Heart right ventricle (tissue), 16 donors: ENCODE measurements at regions of chr10 and their contacts with region 1.

Region 1: DNA sequence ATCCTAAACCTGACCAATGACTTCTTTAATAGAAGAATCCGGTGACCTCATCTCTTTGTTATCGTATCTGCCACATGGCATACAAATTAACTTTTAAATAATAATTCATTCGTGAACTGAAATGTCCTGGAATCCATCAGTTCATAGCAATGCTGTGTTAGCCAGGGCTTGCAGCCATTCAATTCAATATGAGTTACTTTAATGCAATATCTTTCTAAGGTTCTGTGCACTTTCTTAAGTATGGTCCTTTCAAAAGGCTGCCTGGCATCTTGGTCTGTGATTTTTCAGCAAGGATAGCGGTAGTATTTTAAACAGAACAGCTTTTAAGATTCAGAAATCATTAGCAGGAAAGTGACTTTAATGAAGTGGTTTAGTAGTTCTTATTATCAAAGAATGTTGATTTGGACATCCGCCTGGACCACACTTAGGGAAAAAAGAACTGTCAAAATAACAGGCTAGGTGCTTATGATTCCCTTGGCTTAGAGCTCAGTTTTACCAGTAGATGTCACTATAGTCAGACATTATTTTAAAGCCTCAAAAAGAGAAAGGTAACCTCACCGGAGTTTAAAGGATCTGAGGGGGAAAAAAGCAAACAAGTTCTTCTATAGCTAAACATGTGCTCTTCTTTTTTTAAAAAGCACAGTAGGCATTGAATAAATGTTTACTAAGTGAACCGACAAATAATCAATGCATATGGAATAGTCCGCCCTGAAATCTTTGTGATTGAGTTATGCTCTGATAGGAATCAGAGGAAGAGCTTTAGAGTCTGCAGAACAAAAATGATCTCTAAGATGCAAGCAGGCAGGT is 22.7 kb downstream of the SLC35G1 start:
- DNase-seq: no peak
- ATAC-seq: peak in 6 of 8 donors; percentile 33 to 79 (median 70)
- H3K4me3 ChIP-seq: peak overlapping the region in 4 of 10 donors; percentile 9 to 34 (median 16)
- H3K27ac ChIP-seq: no peak overlapping the region
- H3K4me1 ChIP-seq: peaks cover 0 to 20% (median 9%) of the 10 kb centered on the region in 9 donors
- H3K27me3 ChIP-seq: no peaks in the 10 kb centered on the region
- CTCF ChIP-seq: peak; percentile 14 to 72 (median 54)

Region 2: DNA sequence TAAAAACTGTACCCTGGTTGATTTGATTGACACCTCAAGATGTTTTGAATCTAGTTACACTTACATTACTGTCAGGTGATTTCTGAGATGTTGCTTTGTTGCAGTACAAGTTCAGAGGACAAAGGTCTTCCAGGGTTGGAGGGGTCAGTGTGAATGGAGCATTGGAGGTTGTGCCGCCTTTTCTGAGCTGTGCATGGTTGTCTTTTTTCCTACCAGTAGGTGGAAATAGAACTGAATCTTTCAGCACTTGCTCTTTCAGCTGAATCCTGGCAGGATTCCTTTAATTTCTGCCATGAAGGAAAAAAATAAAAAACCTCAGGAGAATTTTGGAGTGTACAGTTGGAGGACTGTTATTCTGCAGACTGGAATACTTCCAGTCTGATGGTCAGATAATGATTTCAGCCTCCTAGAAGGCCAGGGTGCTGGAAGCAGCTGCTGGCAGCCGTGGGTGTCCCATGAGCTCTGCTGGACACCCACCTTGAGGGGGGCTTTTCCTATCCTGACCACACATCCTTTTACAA is 159.9 kb after region 1 on chr10:
- intact Hi-C with region 1: loop called in 4 of 10 experiments (anchors 10 kb)
- DNase-seq: peak in 1 of 2 donors; percentile 15
- ATAC-seq: peak; percentile 65 to 91 (median 80)
- H3K4me3 ChIP-seq: peak overlapping the region in 1 of 10 donors; percentile 25
- H3K27ac ChIP-seq: peak overlapping the region in 5 of 10 donors; percentile 49 to 66 (median 52)
- H3K4me1 ChIP-seq: peaks cover 6 to 26% (median 19%) of the 10 kb centered on the region in 9 donors
- H3K27me3 ChIP-seq: no peaks in the 10 kb centered on the region
- CTCF ChIP-seq: peak in 8 of 9 donors; percentile 32 to 66 (median 50)

Region 3: DNA sequence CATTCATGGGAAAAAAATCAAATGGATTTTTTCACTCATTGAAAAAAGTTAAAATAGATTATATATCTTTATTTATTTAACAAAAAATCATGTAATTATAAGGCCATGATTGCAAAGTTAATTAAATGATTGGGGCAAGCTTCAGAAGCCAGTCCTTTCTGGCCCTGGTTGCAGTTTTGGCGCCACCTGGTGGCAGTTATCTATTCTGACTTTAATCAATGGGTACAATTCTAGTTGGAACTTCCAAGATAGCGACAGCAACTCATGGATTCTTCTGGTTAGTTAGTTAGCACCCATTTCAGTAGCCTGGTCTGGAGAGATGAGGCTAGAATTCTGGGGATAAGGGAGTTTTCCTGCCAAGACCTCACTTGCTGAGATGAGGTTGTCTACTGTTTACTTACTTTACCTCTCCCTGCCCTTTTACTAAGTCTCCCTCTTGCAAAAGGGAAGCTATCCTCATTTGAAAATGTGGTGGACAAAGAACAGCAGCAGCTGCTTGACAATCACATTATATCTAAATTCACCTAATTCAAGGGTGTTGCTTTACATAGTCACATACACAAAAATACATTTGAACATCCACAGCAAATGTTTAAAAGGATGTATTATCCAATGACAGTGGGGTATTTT is 403.9 kb after region 1 on chr10:
- intact Hi-C with region 1: loop called (anchors 1 to 10 kb)
- DNase-seq: peak; percentile 48 to 69
- ATAC-seq: peak in 3 of 8 donors; percentile 43 to 59 (median 47)
- H3K4me3 ChIP-seq: no peak overlapping the region
- H3K27ac ChIP-seq: no peak overlapping the region
- H3K4me1 ChIP-seq: peaks cover 0 to 17% (median 0%) of the 10 kb centered on the region in 9 donors
- H3K27me3 ChIP-seq: no peaks in the 10 kb centered on the region
- CTCF ChIP-seq: peak; percentile 83 to 93 (median 86)

Region 4: GRCh38 chr10:94439275-94439861 is 522.9 kb after region 1 on chr10:
- intact Hi-C with region 1: loop called in 6 of 10 experiments (anchors 5 to 10 kb)
- DNase-seq: no peak
- ATAC-seq: peak in 5 of 8 donors; percentile 27 to 65 (median 55)
- H3K4me3 ChIP-seq: no peak overlapping the region
- H3K27ac ChIP-seq: no peak overlapping the region
- H3K4me1 ChIP-seq: peaks cover 0 to 29% (median 8%) of the 10 kb centered on the region in 9 donors
- H3K27me3 ChIP-seq: no peaks in the 10 kb centered on the region
- CTCF ChIP-seq: peak in 1 of 9 donors; percentile 9